Naive thymus-derived CD4-positive, alpha-beta T cell (primary cell): ENCODE measurements at regions of chr1 and their contacts with region 1.

Region 1: GRCh38 chr1:212062832-212063438 is 27.4 kb downstream of the DTL start:
- DNase-seq: peak in 6 of 9 donors; percentile 8 to 41 (median 33)
- ATAC-seq: peak; percentile 71
- H3K4me3 ChIP-seq: no peak overlapping the region
- H3K4me3 Mint-ChIP-seq: no peak overlapping the region
- H3K27ac ChIP-seq: no peak overlapping the region
- H3K27ac Mint-ChIP-seq: no peak overlapping the region
- H3K4me1 ChIP-seq: no peaks in the 10 kb centered on the region
- H3K4me1 Mint-ChIP-seq: peaks cover 0 to 11% (median 0%) of the 10 kb centered on the region in 7 donors
- H3K27me3 ChIP-seq: no peaks in the 10 kb centered on the region
- H3K27me3 Mint-ChIP-seq: no peaks in the 10 kb centered on the region

Region 2: DNA sequence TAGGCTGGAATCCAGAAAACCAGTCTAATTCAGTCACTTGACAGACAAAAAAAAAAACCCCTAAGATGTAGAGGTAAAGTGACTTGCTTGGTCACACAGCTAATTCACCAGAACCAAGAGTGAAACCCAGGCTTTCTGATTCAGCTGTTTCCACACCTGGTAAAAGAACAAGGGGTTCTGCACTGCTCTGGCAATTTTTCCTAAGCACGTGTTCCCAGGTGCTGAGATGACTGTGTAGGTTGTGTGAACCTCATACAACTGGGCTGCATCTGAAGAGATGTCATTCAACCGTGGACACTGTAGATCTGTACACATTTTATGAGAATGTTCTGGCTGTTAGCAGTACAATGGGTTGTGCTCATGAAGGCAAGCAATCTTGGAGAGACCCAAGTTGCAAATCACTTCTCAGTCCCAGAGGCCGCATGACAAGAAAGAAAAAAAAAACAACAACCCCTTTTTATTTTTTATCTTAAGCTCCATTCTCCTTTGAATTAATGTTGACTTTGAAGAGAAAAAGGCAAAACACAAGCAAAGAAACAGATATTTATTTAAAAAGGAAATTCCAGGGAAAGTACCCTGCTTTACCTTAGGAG is 123.0 kb before region 1 on chr1:
- CTCF ChIA-PET with region 1: no interaction called
- POLR2A ChIA-PET with region 1: no interaction called
- intact Hi-C with region 1: no loop called
- DNase-seq: peak in 1 of 9 donors; percentile 49
- ATAC-seq: no peak
- H3K4me3 ChIP-seq: no peak overlapping the region
- H3K4me3 Mint-ChIP-seq: no peak overlapping the region
- H3K27ac ChIP-seq: no peak overlapping the region
- H3K27ac Mint-ChIP-seq: peak overlapping the region in 7 of 9 donors; percentile 3 to 80 (median 36)
- H3K4me1 ChIP-seq: peaks cover 0 to 14% of the 10 kb centered on the region in 2 donors
- H3K4me1 Mint-ChIP-seq: peaks cover 9 to 37% (median 18%) of the 10 kb centered on the region in 7 donors
- H3K27me3 ChIP-seq: no peaks in the 10 kb centered on the region
- H3K27me3 Mint-ChIP-seq: no peaks in the 10 kb centered on the region

Region 3: DNA sequence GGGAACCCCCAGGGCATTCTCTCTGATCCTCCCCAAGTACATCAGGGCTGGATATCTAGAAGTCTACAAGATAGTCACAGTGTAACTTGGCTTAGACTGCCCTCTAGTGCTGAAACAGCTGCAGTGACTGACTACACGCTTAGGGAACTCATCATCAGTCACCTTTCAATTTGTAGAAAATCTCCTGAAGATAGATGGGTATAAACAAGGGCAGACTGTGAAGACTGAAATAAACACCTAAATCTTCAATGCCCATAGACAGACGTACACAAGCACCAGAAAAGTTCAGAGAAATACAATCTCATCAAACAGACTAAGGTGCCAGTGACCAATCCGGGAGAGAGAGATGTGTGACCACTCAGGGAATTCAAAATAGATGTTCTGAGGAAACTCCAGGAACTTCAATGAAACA is 305.1 kb after region 1 on chr1:
- CTCF ChIA-PET with region 1: interaction called, 7 read pairs
- POLR2A ChIA-PET with region 1: no interaction called
- intact Hi-C with region 1: loop called (anchors 1 to 2 kb)
- DNase-seq: peak in 7 of 9 donors; percentile 34 to 67 (median 63)
- ATAC-seq: peak; percentile 95
- H3K4me3 ChIP-seq: no peak overlapping the region
- H3K4me3 Mint-ChIP-seq: no peak overlapping the region
- H3K27ac ChIP-seq: no peak overlapping the region
- H3K27ac Mint-ChIP-seq: peak overlapping the region in 4 of 9 donors; percentile 5 to 87 (median 52)
- H3K4me1 ChIP-seq: no peaks in the 10 kb centered on the region
- H3K4me1 Mint-ChIP-seq: peaks cover 0 to 9% (median 0%) of the 10 kb centered on the region in 7 donors
- H3K27me3 ChIP-seq: no peaks in the 10 kb centered on the region
- H3K27me3 Mint-ChIP-seq: no peaks in the 10 kb centered on the region